Breast epithelium (tissue), 4 donors: ENCODE measurements at regions of chr7 and their contacts with region 1.

Region 1: GRCh38 chr7:6160191-6160623 is 112.2 kb downstream of the CYTH3 start:
- DNase-seq: peak in 1 of 2 donors; percentile 21
- H3K4me3 ChIP-seq: no peak overlapping the region
- H3K27ac ChIP-seq: peak overlapping the region; percentile 17 to 70
- H3K4me1 ChIP-seq: no peaks in the 10 kb centered on the region
- H3K27me3 ChIP-seq: no peaks in the 10 kb centered on the region
- CTCF ChIP-seq: peak in 2 of 3 donors; percentile 41 to 60
- POLR2A ChIP-seq: no peak

Region 2: GRCh38 chr7:6178298-6179029 is 18.3 kb after region 1 on chr7:
- intact Hi-C with region 1: no loop called
- DNase-seq: no peak
- H3K4me3 ChIP-seq: no peak overlapping the region
- H3K27ac ChIP-seq: peak overlapping the region in 1 of 2 donors; percentile 53
- H3K4me1 ChIP-seq: no peaks in the 10 kb centered on the region
- H3K27me3 ChIP-seq: no peaks in the 10 kb centered on the region
- CTCF ChIP-seq: no peak
- POLR2A ChIP-seq: no peak

Region 3: GRCh38 chr7:6317797-6318438 is 157.7 kb after region 1 on chr7:
- intact Hi-C with region 1: loop called (anchors 10 kb)
- DNase-seq: no peak
- H3K4me3 ChIP-seq: peak overlapping the region in 2 of 3 donors; percentile 0 to 3
- H3K27ac ChIP-seq: peak overlapping the region; percentile 50 to 68
- H3K4me1 ChIP-seq: no peaks in the 10 kb centered on the region
- H3K27me3 ChIP-seq: no peaks in the 10 kb centered on the region
- CTCF ChIP-seq: no peak
- POLR2A ChIP-seq: no peak